BJ (cell line): ENCODE measurements at regions of chr7 and their contacts with region 1.

Region 1: GRCh38 chr7:73606801-73607691 is 17.3 kb downstream of the MLXIPL start:
- DNase-seq: no peak
- H3K4me3 ChIP-seq: peak overlapping the region; percentile 7; the same call in 1 of the 2 replicates
- H3K27me3 ChIP-seq: peaks cover 3% of the 10 kb centered on the region; the same call in 1 of the 2 replicates
- CTCF ChIP-seq: peak; percentile 93

Region 2: DNA sequence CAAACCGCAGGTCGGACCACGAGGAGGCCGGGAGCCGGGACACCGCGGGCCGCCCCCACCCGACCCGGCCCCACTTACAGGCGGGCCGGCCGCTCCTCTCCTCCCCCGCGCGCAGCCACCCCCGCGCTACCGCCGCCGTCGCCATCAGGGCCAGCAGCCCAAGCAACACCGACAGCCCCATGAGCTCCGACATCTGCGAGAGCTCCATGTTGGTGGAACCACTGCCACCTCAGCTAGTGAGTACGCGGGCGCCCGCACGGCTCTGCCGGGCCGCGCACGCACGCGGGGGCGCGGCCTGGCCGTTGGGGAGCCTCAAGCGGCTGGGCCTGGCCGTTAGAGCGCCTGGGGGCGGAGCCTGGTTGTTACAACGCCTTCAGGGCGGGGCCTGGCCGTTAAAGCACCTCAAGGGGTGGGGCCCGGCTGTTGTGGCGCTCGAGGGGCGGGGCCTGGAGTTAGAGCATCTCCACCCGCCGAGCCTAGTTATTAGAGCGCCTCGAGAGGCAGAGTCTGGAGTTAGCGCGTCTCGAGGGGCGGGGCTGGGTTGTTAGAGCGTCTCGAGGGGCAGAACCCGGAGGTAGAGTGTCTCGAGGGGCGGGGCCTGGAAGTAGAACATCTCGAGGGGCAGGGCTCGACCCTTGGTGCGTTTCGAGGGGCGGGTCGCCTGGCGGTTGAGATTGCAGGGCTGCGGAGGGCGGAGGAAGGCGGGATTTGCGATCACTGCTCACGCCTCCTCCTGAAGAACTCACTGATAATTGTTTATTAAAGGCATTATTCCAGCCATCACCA is 28.5 kb before region 1 on chr7 and contains the start of gene TBL2:
- CTCF ChIA-PET with region 1: interaction called, 14 read pairs
- POLR2A ChIA-PET with region 1: no interaction called
- DNase-seq: peak; percentile 88
- H3K4me3 ChIP-seq: peak within 1 kb of the TSS; percentile 90
- H3K27me3 ChIP-seq: no peaks in the 10 kb centered on the region
- CTCF ChIP-seq: peak; percentile 38; the same call in 1 of the 2 replicates
- polyA plus RNA-seq, gene TBL2: 40.6 and 63.7 TPM in 2 replicates

Region 3: GRCh38 chr7:73618538-73618937 is 11.5 kb after region 1 on chr7:
- CTCF ChIA-PET with region 1: interaction called, 21 read pairs
- POLR2A ChIA-PET with region 1: no interaction called
- DNase-seq: no peak
- H3K4me3 ChIP-seq: no peak overlapping the region
- H3K27me3 ChIP-seq: peaks cover 13% of the 10 kb centered on the region
- CTCF ChIP-seq: no peak

Region 4: GRCh38 chr7:73667344-73668102 is 60.5 kb after region 1 on chr7 and contains the start of gene VPS37D:
- CTCF ChIA-PET with region 1: interaction called, 20 read pairs
- POLR2A ChIA-PET with region 1: no interaction called
- DNase-seq: peak; percentile 23
- H3K4me3 ChIP-seq: peak within 1 kb of the TSS; percentile 77
- H3K27me3 ChIP-seq: no peaks in the 10 kb centered on the region
- CTCF ChIP-seq: peak; percentile 48
- polyA plus RNA-seq, gene VPS37D: 2.2 and 3.3 TPM in 2 replicates

Region 5: DNA sequence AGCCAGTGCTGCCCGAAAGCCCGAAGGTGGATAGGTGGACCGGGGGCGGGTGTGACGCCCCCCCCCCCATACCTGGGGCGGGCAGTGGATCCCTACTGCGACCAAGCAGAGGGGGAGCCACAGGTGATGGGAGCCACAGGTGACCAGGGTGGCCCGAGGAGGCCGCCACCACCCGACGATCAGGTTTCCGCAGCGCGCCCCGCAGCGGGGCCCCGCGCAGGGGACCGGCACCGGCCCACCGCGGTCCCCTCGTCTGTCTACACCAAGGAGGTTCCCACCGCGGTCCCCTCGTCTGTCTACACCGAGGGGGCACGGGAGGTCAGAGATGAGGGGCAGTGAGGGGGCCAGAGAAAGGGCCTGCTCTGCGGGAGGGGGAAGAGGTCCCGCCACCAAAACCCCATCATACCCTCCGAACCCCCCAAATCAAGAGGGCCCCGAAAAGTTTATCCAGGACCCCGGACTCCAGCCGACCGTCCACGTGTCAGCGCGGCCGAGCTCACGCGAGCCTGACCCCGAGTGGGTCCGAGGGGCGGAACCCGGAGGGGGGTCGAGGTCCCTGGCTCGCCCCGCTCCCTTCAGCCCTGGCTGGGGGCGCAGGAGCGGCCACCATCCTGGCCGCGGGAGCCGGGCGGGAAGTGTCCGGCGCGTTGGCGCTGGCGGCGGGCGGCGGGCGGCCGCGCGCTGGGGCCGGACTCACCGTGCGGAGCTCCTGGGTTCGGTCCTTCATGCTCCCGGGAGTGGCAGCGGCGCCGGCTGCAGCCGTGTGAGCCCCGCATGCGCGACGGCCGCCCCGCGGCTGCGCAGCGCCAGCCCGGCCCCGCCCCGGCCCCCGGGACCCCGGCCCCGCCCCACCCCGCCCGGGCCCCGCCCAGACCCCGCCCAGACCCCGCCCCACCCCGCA is 112.1 kb after region 1 on chr7 and contains the start of gene STX1A:
- CTCF ChIA-PET with region 1: interaction called, 159 read pairs
- POLR2A ChIA-PET with region 1: no interaction called
- DNase-seq: no peak
- H3K4me3 ChIP-seq: peak within 1 kb of the TSS; percentile 83
- H3K27me3 ChIP-seq: no peaks in the 10 kb centered on the region
- CTCF ChIP-seq: no peak
- polyA plus RNA-seq, gene STX1A: 10.7 and 12.2 TPM in 2 replicates

Region 6: GRCh38 chr7:73738612-73739374 is 131.7 kb after region 1 on chr7 and contains the start of gene ABHD11:
- CTCF ChIA-PET with region 1: interaction called, 92 read pairs
- POLR2A ChIA-PET with region 1: no interaction called
- DNase-seq: peak; percentile 73
- H3K4me3 ChIP-seq: peak within 1 kb of the TSS; percentile 76
- H3K27me3 ChIP-seq: no peaks in the 10 kb centered on the region
- CTCF ChIP-seq: no peak
- polyA plus RNA-seq, gene ABHD11: 11.6 and 16.9 TPM in 2 replicates